ENCODE measurements at regions of chr5 and their contacts with region 1.

Region 1: GRCh38 chr5:160445132-160445531 is 23.5 kb downstream of the PTTG1 start:
- DNase-seq: no peak
- ATAC-seq: peak; percentile 37
- H3K4me3 ChIP-seq: no peak overlapping the region
- H3K27ac ChIP-seq: no peak overlapping the region
- H3K4me1 ChIP-seq: peaks cover 62% of the 10 kb centered on the region
- H3K27me3 ChIP-seq: no peaks in the 10 kb centered on the region
- CTCF ChIP-seq: no peak
- EP300 ChIP-seq: peak in 1 of 2 experiments; percentile 39; a peak in 1 of 4 replicates
- POLR2A ChIP-seq: no peak
- RAD21 ChIP-seq: no peak

Region 2: DNA sequence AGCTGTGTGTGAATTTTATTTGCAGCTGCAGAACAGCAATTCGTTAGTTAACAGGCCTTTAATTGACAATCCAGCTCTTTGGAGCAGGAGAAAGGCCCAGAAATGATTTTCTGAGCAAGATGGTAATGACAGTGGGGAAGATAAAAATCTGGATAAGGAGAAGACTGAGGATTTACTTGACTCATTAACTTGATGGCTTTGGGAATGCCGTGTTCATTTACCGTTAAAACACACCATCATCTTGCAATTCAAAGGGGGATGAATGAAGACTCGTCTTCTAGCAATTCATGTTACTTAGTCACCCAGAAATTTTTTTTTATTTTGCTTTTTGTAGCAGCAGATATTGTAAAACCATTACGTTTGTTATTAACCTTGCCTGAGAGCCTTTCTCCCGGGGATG is 28.5 kb after region 1 on chr5:
- CTCF ChIA-PET with region 1: interaction called, 230 read pairs
- POLR2A ChIA-PET with region 1: interaction called, 156 read pairs
- RAD21 ChIA-PET with region 1: interaction called, 329 read pairs
- SMC1A ChIA-PET with region 1: interaction called, 511 read pairs
- in situ Hi-C with region 1: no loop called
- intact Hi-C with region 1: no loop called
- DNase-seq: no peak
- ATAC-seq: no peak
- H3K4me3 ChIP-seq: peak overlapping the region; percentile 88
- H3K27ac ChIP-seq: peak overlapping the region; percentile 54
- H3K4me1 ChIP-seq: peaks cover 18% of the 10 kb centered on the region
- H3K27me3 ChIP-seq: no peaks in the 10 kb centered on the region
- CTCF ChIP-seq: no peak
- EP300 ChIP-seq: no peak
- POLR2A ChIP-seq: no peak
- RAD21 ChIP-seq: no peak

Region 3: GRCh38 chr5:160539431-160539830 is 94.3 kb after region 1 on chr5:
- CTCF ChIA-PET with region 1: no interaction called
- POLR2A ChIA-PET with region 1: no interaction called
- RAD21 ChIA-PET with region 1: no interaction called
- SMC1A ChIA-PET with region 1: no interaction called
- in situ Hi-C with region 1: no loop called
- intact Hi-C with region 1: no loop called
- DNase-seq: no peak
- ATAC-seq: no peak
- H3K4me3 ChIP-seq: no peak overlapping the region
- H3K27ac ChIP-seq: no peak overlapping the region
- H3K4me1 ChIP-seq: no peaks in the 10 kb centered on the region
- H3K27me3 ChIP-seq: no peaks in the 10 kb centered on the region
- CTCF ChIP-seq: no peak
- EP300 ChIP-seq: no peak
- POLR2A ChIP-seq: no peak
- RAD21 ChIP-seq: no peak

Measured in GM12878 (cell line).